ENCODE measurements at regions of chr22 and their contacts with region 1.

Region 1: DNA sequence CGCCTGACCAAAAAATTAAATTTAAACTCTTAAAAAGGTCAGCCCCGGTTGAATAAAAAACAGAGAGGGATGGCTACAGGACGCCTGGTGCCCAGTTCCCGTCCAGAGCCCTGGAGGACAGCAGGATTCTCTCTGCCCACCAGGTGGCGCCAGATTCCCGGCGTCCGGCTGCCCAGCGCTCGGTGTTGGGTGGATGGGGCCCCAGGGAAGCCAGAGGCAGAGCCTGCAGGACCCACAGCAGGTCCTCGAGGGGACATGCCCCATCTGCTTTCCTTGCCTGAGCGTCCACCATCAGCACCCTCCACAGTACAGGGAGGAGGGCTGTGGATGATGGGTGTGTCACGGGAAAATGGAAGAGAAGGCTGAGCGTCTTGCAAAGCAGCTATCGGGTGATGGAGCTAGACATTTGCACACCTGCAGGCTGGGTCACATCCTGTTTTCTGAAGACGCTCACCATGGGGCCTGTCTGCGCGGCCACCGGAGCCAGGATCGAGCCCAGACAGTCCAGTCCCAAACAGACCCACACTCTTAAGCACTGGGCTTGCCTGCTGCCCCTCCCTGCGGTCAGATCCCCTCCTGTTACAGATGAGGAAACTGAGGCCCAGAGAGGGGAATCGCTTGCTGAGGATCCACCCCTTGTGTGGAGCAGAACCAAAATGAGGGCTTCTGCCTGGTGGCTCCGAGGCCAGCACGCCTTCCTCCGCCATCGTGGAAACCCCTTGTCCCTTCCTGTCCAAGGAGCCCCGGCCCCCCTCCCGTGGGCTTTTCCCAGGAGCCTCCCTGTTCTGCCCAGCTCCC is 18.5 kb upstream of the CBX7 start:
- DNase-seq: peak; percentile 76
- H3K4me3 ChIP-seq: no peak overlapping the region
- H3K27ac ChIP-seq: peak overlapping the region; percentile 51
- H3K4me1 ChIP-seq: peaks cover 48% of the 10 kb centered on the region
- H3K27me3 ChIP-seq: no peaks in the 10 kb centered on the region
- CTCF ChIP-seq: peak; percentile 86 to 94
- POLR2A ChIP-seq: no peak

Region 2: GRCh38 chr22:39141829-39142624 is 29.0 kb before region 1 on chr22:
- CTCF ChIA-PET with region 1: no interaction called
- POLR2A ChIA-PET with region 1: no interaction called
- dilution Hi-C with region 1: no loop called
- intact Hi-C with region 1: no loop called
- DNase-seq: no peak
- H3K4me3 ChIP-seq: no peak overlapping the region
- H3K27ac ChIP-seq: no peak overlapping the region
- H3K4me1 ChIP-seq: peaks cover 11% of the 10 kb centered on the region
- H3K27me3 ChIP-seq: no peaks in the 10 kb centered on the region
- CTCF ChIP-seq: no peak
- POLR2A ChIP-seq: no peak

Region 3: DNA sequence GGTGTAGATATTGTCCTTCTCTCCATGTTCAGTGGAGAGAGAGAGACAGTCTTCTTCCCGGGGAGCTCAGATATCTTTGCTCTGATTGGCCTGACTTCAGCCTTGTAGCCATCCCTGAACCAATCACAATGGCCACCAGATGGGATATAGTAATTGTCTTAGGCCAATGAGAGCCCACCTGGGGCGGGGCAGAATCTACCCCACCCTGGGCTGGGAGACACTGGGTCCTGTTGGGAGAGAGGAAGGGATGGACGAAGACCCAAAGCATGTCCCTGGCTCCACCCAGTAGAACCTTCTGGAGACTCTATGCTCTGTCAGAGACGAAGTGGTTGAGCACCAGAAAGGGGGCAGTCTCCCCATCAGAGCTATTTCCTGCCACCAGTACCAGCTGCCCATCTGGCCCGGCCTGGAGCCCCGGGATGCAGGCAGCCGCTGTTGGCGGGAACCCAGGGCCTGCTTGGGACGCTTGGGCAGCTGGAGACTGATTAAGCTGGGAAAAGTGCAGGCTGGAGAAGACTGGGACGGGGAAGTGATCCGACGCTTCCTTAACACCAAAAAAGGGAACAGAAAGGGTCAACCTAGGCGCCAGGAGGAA is 13.1 kb after region 1 on chr22:
- CTCF ChIA-PET with region 1: no interaction called
- POLR2A ChIA-PET with region 1: no interaction called
- dilution Hi-C with region 1: no loop called
- intact Hi-C with region 1: no loop called
- DNase-seq: peak; percentile 22
- H3K4me3 ChIP-seq: no peak overlapping the region
- H3K27ac ChIP-seq: no peak overlapping the region
- H3K4me1 ChIP-seq: peaks cover 12% of the 10 kb centered on the region
- H3K27me3 ChIP-seq: no peaks in the 10 kb centered on the region
- CTCF ChIP-seq: no peak
- POLR2A ChIP-seq: no peak

Region 4: GRCh38 chr22:39215426-39216120 is 44.5 kb after region 1 on chr22:
- CTCF ChIA-PET with region 1: interaction called, 17 read pairs
- POLR2A ChIA-PET with region 1: interaction called, 7 read pairs
- dilution Hi-C with region 1: no loop called
- intact Hi-C with region 1: no loop called
- DNase-seq: no peak
- H3K4me3 ChIP-seq: no peak overlapping the region
- H3K27ac ChIP-seq: no peak overlapping the region
- H3K4me1 ChIP-seq: peaks cover 16% of the 10 kb centered on the region
- H3K27me3 ChIP-seq: no peaks in the 10 kb centered on the region
- CTCF ChIP-seq: peak; percentile 22 to 45
- POLR2A ChIP-seq: no peak

Region 5: GRCh38 chr22:39230261-39231196 is 59.5 kb after region 1 on chr22:
- CTCF ChIA-PET with region 1: interaction called, 31 read pairs
- POLR2A ChIA-PET with region 1: interaction called, 5 read pairs
- dilution Hi-C with region 1: no loop called
- intact Hi-C with region 1: loop called (anchors 1 kb)
- DNase-seq: no peak
- H3K4me3 ChIP-seq: no peak overlapping the region
- H3K27ac ChIP-seq: peak overlapping the region; percentile 51
- H3K4me1 ChIP-seq: peaks cover 47% of the 10 kb centered on the region
- H3K27me3 ChIP-seq: no peaks in the 10 kb centered on the region
- CTCF ChIP-seq: peak in 1 of 2 donors; percentile 32
- POLR2A ChIP-seq: no peak

Region 6: GRCh38 chr22:39244496-39245129 is 73.6 kb after region 1 on chr22 and contains the start of gene PDGFB:
- CTCF ChIA-PET with region 1: interaction called, 15 read pairs
- POLR2A ChIA-PET with region 1: interaction called, 7 read pairs
- dilution Hi-C with region 1: no loop called
- intact Hi-C with region 1: loop called (anchors 1 kb)
- DNase-seq: peak; percentile 65
- H3K4me3 ChIP-seq: peak within 1 kb of the TSS; percentile 68 to 91 (median 78)
- H3K27ac ChIP-seq: peak within 1 kb of the TSS; percentile 53
- H3K4me1 ChIP-seq: peaks cover 34% of the 10 kb centered on the region
- H3K27me3 ChIP-seq: no peaks in the 10 kb centered on the region
- CTCF ChIP-seq: no peak
- POLR2A ChIP-seq: peak; percentile 99
- total RNA-seq, gene PDGFB: 240 and 273 TPM in 2 replicates

Region 7: GRCh38 chr22:39306581-39307361 is 135.7 kb after region 1 on chr22:
- CTCF ChIA-PET with region 1: interaction called, 72 read pairs
- POLR2A ChIA-PET with region 1: interaction called, 4 read pairs
- dilution Hi-C with region 1: no loop called
- intact Hi-C with region 1: loop called (anchors 1 kb)
- DNase-seq: peak; percentile 71
- H3K4me3 ChIP-seq: no peak overlapping the region
- H3K27ac ChIP-seq: no peak overlapping the region
- H3K4me1 ChIP-seq: peaks cover 14% of the 10 kb centered on the region
- H3K27me3 ChIP-seq: no peaks in the 10 kb centered on the region
- CTCF ChIP-seq: peak; percentile 46 to 71
- POLR2A ChIP-seq: no peak

Measured in endothelial cell of umbilical vein (primary cell).